ENCODE measurements at regions of chr6 and their contacts with region 1.

Region 1: GRCh38 chr6:130322673-130323268 is 43.0 kb upstream of the TMEM200A start:
- DNase-seq: peak; percentile 63
- ATAC-seq: no peak
- H3K4me3 Mint-ChIP-seq: no peak overlapping the region
- H3K27ac Mint-ChIP-seq: no peak overlapping the region
- H3K4me1 Mint-ChIP-seq: no peaks in the 10 kb centered on the region
- H3K27me3 Mint-ChIP-seq: no peaks in the 10 kb centered on the region

Region 2: GRCh38 chr6:130376936-130377335 is 54.2 kb after region 1 on chr6:
- CTCF ChIA-PET with region 1: no interaction called
- POLR2A ChIA-PET with region 1: no interaction called
- intact Hi-C with region 1: no loop called
- DNase-seq: no peak
- ATAC-seq: no peak
- H3K4me3 Mint-ChIP-seq: no peak overlapping the region
- H3K27ac Mint-ChIP-seq: no peak overlapping the region
- H3K4me1 Mint-ChIP-seq: peaks cover 10% of the 10 kb centered on the region
- H3K27me3 Mint-ChIP-seq: no peaks in the 10 kb centered on the region

Region 3: GRCh38 chr6:130758813-130759212 is 436.0 kb after region 1 on chr6:
- CTCF ChIA-PET with region 1: interaction called, 3 read pairs
- POLR2A ChIA-PET with region 1: no interaction called
- intact Hi-C with region 1: loop called in 1 of 2 experiments (anchors 2 kb)
- DNase-seq: no peak
- ATAC-seq: no peak
- H3K4me3 Mint-ChIP-seq: no peak overlapping the region
- H3K27ac Mint-ChIP-seq: no peak overlapping the region
- H3K4me1 Mint-ChIP-seq: peaks cover 5% of the 10 kb centered on the region
- H3K27me3 Mint-ChIP-seq: peaks cover 2% of the 10 kb centered on the region

Region 4: GRCh38 chr6:130843575-130844320 is 521.0 kb after region 1 on chr6:
- CTCF ChIA-PET with region 1: interaction called, 7 read pairs
- POLR2A ChIA-PET with region 1: no interaction called
- intact Hi-C with region 1: loop called (anchors 1 to 2 kb)
- DNase-seq: no peak
- ATAC-seq: peak; percentile 60
- H3K4me3 Mint-ChIP-seq: no peak overlapping the region
- H3K27ac Mint-ChIP-seq: no peak overlapping the region
- H3K4me1 Mint-ChIP-seq: peaks cover 2% of the 10 kb centered on the region
- H3K27me3 Mint-ChIP-seq: no peaks in the 10 kb centered on the region

Region 5: GRCh38 chr6:130872250-130873095 is 549.7 kb after region 1 on chr6:
- CTCF ChIA-PET with region 1: interaction called, 6 read pairs
- POLR2A ChIA-PET with region 1: no interaction called
- intact Hi-C with region 1: loop called (anchors 1 to 2 kb)
- DNase-seq: peak; percentile 85
- ATAC-seq: peak; percentile 42
- H3K4me3 Mint-ChIP-seq: no peak overlapping the region
- H3K27ac Mint-ChIP-seq: no peak overlapping the region
- H3K4me1 Mint-ChIP-seq: peaks cover 2% of the 10 kb centered on the region
- H3K27me3 Mint-ChIP-seq: no peaks in the 10 kb centered on the region

Region 6: GRCh38 chr6:131116749-131117360 is 794.1 kb after region 1 on chr6:
- CTCF ChIA-PET with region 1: no interaction called
- POLR2A ChIA-PET with region 1: no interaction called
- intact Hi-C with region 1: loop called in 1 of 2 experiments (anchors 10 kb)
- DNase-seq: no peak
- ATAC-seq: no peak
- H3K4me3 Mint-ChIP-seq: no peak overlapping the region
- H3K27ac Mint-ChIP-seq: no peak overlapping the region
- H3K4me1 Mint-ChIP-seq: no peaks in the 10 kb centered on the region
- H3K27me3 Mint-ChIP-seq: no peaks in the 10 kb centered on the region

Measured in activated CD4-positive, alpha-beta T cell treated with anti-CD3 and anti-CD28 coated beads for 36 hours (primary cell).